Esophagus squamous epithelium (tissue), 5 donors: ENCODE measurements at regions of chr17 and their contacts with region 1.

Region 1: GRCh38 chr17:385926-386876 is 33.6 kb upstream of the RPH3AL start:
- DNase-seq: no peak
- H3K4me3 ChIP-seq: peak overlapping the region; percentile 47 to 82 (median 60)
- H3K27ac ChIP-seq: peak overlapping the region in 3 of 4 donors; percentile 81 to 87 (median 87)
- H3K4me1 ChIP-seq: peaks cover 13 to 20% (median 15%) of the 10 kb centered on the region in 3 donors
- H3K27me3 ChIP-seq: peaks cover 0 to 24% (median 0%) of the 10 kb centered on the region in 4 donors
- CTCF ChIP-seq: peak; percentile 58 to 91 (median 82)
- POLR2A ChIP-seq: no peak

Region 2: GRCh38 chr17:143782-144281 is 242.4 kb before region 1 on chr17:
- intact Hi-C with region 1: loop called (anchors 2 kb)
- DNase-seq: no peak
- H3K4me3 ChIP-seq: peak overlapping the region in 1 of 4 donors; percentile 30
- H3K27ac ChIP-seq: peak overlapping the region in 1 of 4 donors; percentile 17
- H3K4me1 ChIP-seq: peaks cover 0 to 8% (median 3%) of the 10 kb centered on the region in 3 donors
- H3K27me3 ChIP-seq: peaks cover 0 to 13% (median 0%) of the 10 kb centered on the region in 4 donors
- CTCF ChIP-seq: peak; percentile 86 to 97 (median 92)
- POLR2A ChIP-seq: no peak

Region 3: GRCh38 chr17:444879-445454 is 58.8 kb after region 1 on chr17:
- intact Hi-C with region 1: no loop called
- DNase-seq: no peak
- H3K4me3 ChIP-seq: no peak overlapping the region
- H3K27ac ChIP-seq: no peak overlapping the region
- H3K4me1 ChIP-seq: no peaks in the 10 kb centered on the region
- H3K27me3 ChIP-seq: no peaks in the 10 kb centered on the region
- CTCF ChIP-seq: no peak
- POLR2A ChIP-seq: no peak